ENCODE measurements at regions of chr17 and their contacts with region 1.

Region 1: DNA sequence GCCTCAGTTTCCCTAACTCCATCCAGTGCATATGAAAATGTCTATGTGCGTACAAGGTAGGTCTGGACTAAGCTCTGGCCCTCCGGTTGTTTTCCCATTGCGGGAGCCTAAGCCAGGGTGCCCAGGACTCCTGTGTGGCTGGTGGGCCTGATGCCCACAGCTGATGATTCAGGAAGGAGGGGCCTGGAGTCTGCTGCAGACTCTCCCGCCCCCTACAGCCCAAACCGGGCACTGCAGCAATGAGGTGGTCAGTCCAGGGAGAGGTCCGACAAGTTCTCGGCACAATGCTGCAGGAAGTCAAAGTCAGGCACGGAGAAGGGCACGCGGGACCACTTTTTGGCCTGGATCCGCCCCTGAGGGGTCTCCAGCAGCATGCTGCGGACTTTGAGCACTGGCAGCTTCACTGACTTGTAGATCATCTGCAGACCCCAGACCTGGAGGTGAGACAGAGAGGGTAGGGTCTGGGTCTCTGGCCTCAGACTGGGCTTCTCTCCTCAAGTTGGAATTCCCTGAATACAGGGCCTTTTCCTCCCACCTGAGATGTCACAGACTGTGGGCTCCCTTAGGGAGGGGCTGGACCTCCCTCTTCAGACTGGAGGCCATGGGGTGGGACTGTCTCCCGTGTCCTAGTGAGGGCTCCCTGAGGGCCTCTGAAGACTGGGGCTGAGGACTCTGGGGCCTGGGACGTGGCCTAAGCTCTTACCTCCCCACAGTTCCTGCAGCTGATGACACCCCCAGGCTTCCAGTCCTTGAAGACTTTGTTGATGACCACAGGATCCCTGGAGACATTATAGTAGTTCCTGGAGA is 3.4 kb upstream of the ZNF385C start:
- DNase-seq: peak; percentile 92
- H3K4me3 ChIP-seq: no peak overlapping the region
- H3K27ac ChIP-seq: no peak overlapping the region
- H3K4me1 ChIP-seq: peaks cover 0 to 8% of the 10 kb centered on the region in 2 experiments; a peak in 1 of 4 replicates
- H3K27me3 ChIP-seq: no peaks in the 10 kb centered on the region; the same call in 1 of the 2 replicates
- CTCF ChIP-seq: peak; percentile 86
- EP300 ChIP-seq: no peak
- RAD21 ChIP-seq: peak; percentile 86

Region 2: GRCh38 chr17:41474863-41475262 is 626.9 kb before region 1 on chr17:
- CTCF ChIA-PET with region 1: no interaction called
- POLR2A ChIA-PET with region 1: no interaction called
- DNase-seq: no peak
- H3K4me3 ChIP-seq: no peak overlapping the region
- H3K27ac ChIP-seq: no peak overlapping the region
- H3K4me1 ChIP-seq: no peaks in the 10 kb centered on the region
- H3K27me3 ChIP-seq: no peaks in the 10 kb centered on the region
- CTCF ChIP-seq: no peak
- EP300 ChIP-seq: no peak
- RAD21 ChIP-seq: no peak

Region 3: GRCh38 chr17:42039794-42040763 is 61.6 kb before region 1 on chr17:
- CTCF ChIA-PET with region 1: interaction called, 21 read pairs
- POLR2A ChIA-PET with region 1: no interaction called
- DNase-seq: no peak
- H3K4me3 ChIP-seq: no peak overlapping the region
- H3K27ac ChIP-seq: no peak overlapping the region
- H3K4me1 ChIP-seq: no peaks in the 10 kb centered on the region
- H3K27me3 ChIP-seq: no peaks in the 10 kb centered on the region
- CTCF ChIP-seq: no peak
- EP300 ChIP-seq: no peak
- RAD21 ChIP-seq: no peak

Region 4: DNA sequence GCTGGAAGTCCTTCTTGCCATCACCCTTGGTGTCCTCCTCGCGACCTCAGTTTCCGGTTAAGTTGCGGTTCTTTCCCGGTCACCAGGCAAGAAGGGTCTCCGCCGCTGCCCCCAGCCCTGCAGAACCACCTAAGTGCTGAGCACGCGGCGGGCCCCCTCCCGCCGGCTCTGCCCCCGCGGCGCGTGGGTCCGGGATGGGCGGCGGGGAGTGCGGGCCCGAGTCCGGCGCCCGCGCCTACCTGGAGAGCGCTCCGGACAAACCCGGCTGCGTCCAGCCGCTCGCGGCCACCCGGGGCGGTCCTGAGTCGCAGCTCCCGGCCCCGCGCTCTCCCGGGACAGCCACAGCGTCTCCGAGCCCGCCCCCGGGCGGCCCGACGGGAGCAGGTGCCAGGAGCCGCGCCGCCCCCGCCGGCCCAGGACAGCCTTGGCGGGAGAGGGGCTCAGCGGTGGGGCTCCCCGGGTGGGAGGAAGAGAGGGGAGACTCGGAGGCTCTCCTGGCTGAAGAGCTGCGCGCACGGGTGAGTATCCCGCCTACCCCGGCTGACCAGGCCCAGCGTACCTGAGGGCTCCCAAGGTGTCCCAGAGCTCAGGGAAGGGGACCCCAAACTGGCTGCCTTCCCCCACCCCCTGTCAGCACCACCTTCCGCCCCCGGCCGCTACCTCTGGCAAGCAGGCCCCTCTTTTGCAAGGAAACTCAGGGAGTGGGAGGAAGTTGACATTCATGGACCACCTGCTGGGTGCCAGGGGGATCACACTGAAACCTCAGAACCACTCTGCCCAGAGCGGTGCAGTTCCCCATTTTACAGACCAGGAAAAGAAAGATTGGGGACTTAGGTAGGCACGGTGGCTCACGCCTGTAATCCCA is 29.2 kb before region 1 on chr17:
- CTCF ChIA-PET with region 1: interaction called, 187 read pairs
- POLR2A ChIA-PET with region 1: no interaction called
- DNase-seq: peak; percentile 83
- H3K4me3 ChIP-seq: peak overlapping the region in 1 of 2 experiments; percentile 42; a peak in 2 of 4 replicates
- H3K27ac ChIP-seq: no peak overlapping the region
- H3K4me1 ChIP-seq: peaks cover 0 to 9% of the 10 kb centered on the region in 2 experiments; a peak in 1 of 4 replicates
- H3K27me3 ChIP-seq: no peaks in the 10 kb centered on the region
- CTCF ChIP-seq: no peak
- EP300 ChIP-seq: no peak
- RAD21 ChIP-seq: no peak

Region 5: GRCh38 chr17:42087736-42088705 is 13.7 kb before region 1 on chr17:
- CTCF ChIA-PET with region 1: interaction called, 46 read pairs
- POLR2A ChIA-PET with region 1: no interaction called
- DNase-seq: no peak
- H3K4me3 ChIP-seq: no peak overlapping the region
- H3K27ac ChIP-seq: no peak overlapping the region
- H3K4me1 ChIP-seq: no peaks in the 10 kb centered on the region
- H3K27me3 ChIP-seq: peaks cover 7% of the 10 kb centered on the region; the same call in 1 of the 2 replicates
- CTCF ChIP-seq: no peak
- EP300 ChIP-seq: no peak
- RAD21 ChIP-seq: no peak

Region 6: DNA sequence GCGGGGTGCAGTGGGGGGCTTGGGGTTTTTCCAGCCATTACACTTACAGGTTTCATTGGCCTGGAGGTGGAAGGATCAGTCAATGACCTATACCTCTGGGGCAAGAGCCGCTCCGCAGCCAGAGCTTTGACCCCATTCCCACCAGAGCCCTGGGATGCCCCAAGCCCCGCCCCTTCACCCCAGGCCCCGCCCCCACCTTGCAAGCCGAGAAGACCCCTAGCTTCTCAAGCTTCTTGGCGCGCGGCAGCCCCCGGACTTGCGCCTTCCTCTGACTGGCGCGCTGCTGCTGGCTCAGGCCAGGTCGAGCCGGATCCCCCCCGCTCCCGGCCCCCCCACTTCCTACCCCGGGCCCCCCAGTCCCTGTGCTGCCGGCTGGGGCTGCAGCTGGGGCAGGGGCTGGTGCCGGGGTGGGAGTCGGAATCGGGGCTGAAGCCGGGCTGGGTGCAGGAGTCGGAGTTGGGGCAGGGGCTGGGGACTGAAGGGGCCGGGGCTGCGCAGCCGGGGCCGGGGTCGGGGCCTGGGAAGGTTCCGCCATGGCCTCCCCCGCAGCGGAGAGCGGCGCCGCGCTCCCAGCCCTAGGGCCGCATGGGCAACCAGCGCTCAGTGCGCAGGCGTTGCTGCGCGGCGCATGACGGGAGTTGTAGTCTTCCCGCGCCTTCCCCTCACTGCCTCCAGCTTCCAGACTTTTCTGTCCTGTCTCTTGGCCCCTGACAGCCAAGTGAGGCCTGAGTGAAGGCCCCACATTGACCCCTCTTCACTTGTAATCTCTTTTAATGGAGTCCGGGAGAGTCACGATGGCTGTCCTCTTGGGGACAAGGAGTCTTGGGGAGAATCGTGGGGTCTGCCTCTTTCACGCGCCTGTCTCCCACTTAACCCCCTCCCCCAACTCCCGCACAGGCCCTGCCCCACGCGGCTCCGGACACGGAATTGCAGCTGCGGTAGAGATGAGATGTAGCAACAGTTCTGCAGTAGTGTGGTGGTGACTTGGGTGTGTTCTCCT is 19.4 kb after region 1 on chr17 and contains the start of gene KAT2A:
- CTCF ChIA-PET with region 1: interaction called, 36 read pairs
- POLR2A ChIA-PET with region 1: no interaction called
- DNase-seq: peak; percentile 97
- H3K4me3 ChIP-seq: peak within 1 kb of the TSS; percentile 49 to 71
- H3K27ac ChIP-seq: peak within 1 kb of the TSS in 1 of 2 experiments; percentile 64; a peak in 2 of 4 replicates
- H3K4me1 ChIP-seq: peaks cover 0 to 11% of the 10 kb centered on the region in 2 experiments; a peak in 1 of 4 replicates
- H3K27me3 ChIP-seq: no peaks in the 10 kb centered on the region
- CTCF ChIP-seq: no peak
- EP300 ChIP-seq: no peak
- RAD21 ChIP-seq: no peak
- polyA plus RNA-seq, gene KAT2A: 45.1 and 58.6 TPM in 2 replicates

Region 7: GRCh38 chr17:42200702-42201101 is 99.0 kb after region 1 on chr17:
- CTCF ChIA-PET with region 1: no interaction called
- POLR2A ChIA-PET with region 1: no interaction called
- DNase-seq: peak; percentile 82
- H3K4me3 ChIP-seq: no peak overlapping the region
- H3K27ac ChIP-seq: peak overlapping the region in 1 of 2 experiments; percentile 83; a peak in 2 of 4 replicates
- H3K4me1 ChIP-seq: peaks cover 0 to 12% of the 10 kb centered on the region in 2 experiments; a peak in 1 of 4 replicates
- H3K27me3 ChIP-seq: no peaks in the 10 kb centered on the region
- CTCF ChIP-seq: no peak
- EP300 ChIP-seq: no peak
- RAD21 ChIP-seq: no peak

Measured in SK-N-SH (cell line).